B cell (primary cell): ENCODE measurements at regions of chr5 and their contacts with region 1.

Region 1: GRCh38 chr5:56838409-56839039 is 23.2 kb downstream of the MAP3K1 start:
- DNase-seq: peak; percentile 81
- ATAC-seq: peak; percentile 70
- H3K4me3 ChIP-seq: peak overlapping the region in 1 of 5 experiments; percentile 29
- H3K4me3 Mint-ChIP-seq: peak overlapping the region; percentile 47
- H3K27ac ChIP-seq: peak overlapping the region; percentile 48 to 85
- H3K27ac Mint-ChIP-seq: peak overlapping the region; percentile 74
- H3K4me1 ChIP-seq: peaks cover 97% of the 10 kb centered on the region in 2 donors
- H3K4me1 Mint-ChIP-seq: peaks cover 91% of the 10 kb centered on the region
- H3K27me3 ChIP-seq: no peaks in the 10 kb centered on the region
- H3K27me3 Mint-ChIP-seq: no peaks in the 10 kb centered on the region
- CTCF ChIP-seq: peak; percentile 75

Region 2: DNA sequence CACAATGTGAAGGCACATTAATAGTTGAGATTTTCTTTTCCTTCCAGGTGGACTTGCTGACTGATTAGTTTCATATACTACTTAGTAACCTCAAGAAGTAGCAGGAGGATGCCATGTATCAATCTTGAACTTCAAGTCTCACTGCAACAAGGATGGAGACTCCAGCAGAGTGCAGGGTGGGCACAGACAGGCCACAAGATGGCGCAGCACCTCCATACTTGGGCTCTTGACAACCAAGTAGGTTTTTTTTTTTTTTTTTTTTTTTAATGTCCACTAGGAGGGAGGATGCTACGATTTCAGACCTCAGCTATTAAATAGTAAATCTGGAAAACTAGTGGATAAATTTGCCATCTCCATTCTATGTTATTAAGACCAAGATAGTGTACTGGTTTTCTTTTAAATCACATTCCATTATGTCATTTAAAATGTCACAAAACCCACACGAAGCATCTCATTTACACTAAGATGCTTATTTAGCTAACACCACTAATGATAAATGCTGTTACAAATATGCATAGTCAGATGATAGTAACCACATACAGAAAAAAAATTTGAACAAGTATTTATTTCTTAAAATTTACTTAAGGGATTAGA is 902.3 kb before region 1 on chr5:
- CTCF ChIA-PET with region 1: interaction called, 16 read pairs
- POLR2A ChIA-PET with region 1: no interaction called
- intact Hi-C with region 1: loop called (anchors 2 kb)
- DNase-seq: peak; percentile 83
- ATAC-seq: peak; percentile 89
- H3K4me3 ChIP-seq: no peak overlapping the region
- H3K4me3 Mint-ChIP-seq: no peak overlapping the region
- H3K27ac ChIP-seq: no peak overlapping the region
- H3K27ac Mint-ChIP-seq: no peak overlapping the region
- H3K4me1 ChIP-seq: no peaks in the 10 kb centered on the region
- H3K4me1 Mint-ChIP-seq: no peaks in the 10 kb centered on the region
- H3K27me3 ChIP-seq: no peaks in the 10 kb centered on the region
- H3K27me3 Mint-ChIP-seq: no peaks in the 10 kb centered on the region
- CTCF ChIP-seq: peak; percentile 92

Region 3: GRCh38 chr5:56328753-56329560 is 509.6 kb before region 1 on chr5:
- CTCF ChIA-PET with region 1: interaction called, 10 read pairs
- POLR2A ChIA-PET with region 1: no interaction called
- intact Hi-C with region 1: loop called (anchors 5 kb)
- DNase-seq: peak; percentile 59
- ATAC-seq: peak; percentile 76
- H3K4me3 ChIP-seq: peak overlapping the region in 1 of 5 experiments; percentile 46
- H3K4me3 Mint-ChIP-seq: peak overlapping the region; percentile 47
- H3K27ac ChIP-seq: peak overlapping the region; percentile 77 to 92
- H3K27ac Mint-ChIP-seq: peak overlapping the region; percentile 91
- H3K4me1 ChIP-seq: peaks cover 41 to 47% of the 10 kb centered on the region in 2 donors
- H3K4me1 Mint-ChIP-seq: peaks cover 60% of the 10 kb centered on the region
- H3K27me3 ChIP-seq: no peaks in the 10 kb centered on the region
- H3K27me3 Mint-ChIP-seq: no peaks in the 10 kb centered on the region
- CTCF ChIP-seq: no peak

Region 4: GRCh38 chr5:56565644-56566043 is 272.9 kb before region 1 on chr5:
- CTCF ChIA-PET with region 1: interaction called, 21 read pairs
- POLR2A ChIA-PET with region 1: no interaction called
- intact Hi-C with region 1: no loop called
- DNase-seq: peak; percentile 82
- ATAC-seq: peak; percentile 97
- H3K4me3 ChIP-seq: peak overlapping the region in 3 of 5 experiments; percentile 6 to 20 (median 9)
- H3K4me3 Mint-ChIP-seq: peak overlapping the region; percentile 56
- H3K27ac ChIP-seq: no peak overlapping the region
- H3K27ac Mint-ChIP-seq: peak overlapping the region; percentile 69
- H3K4me1 ChIP-seq: peaks cover 34 to 35% of the 10 kb centered on the region in 2 donors
- H3K4me1 Mint-ChIP-seq: peaks cover 41% of the 10 kb centered on the region
- H3K27me3 ChIP-seq: no peaks in the 10 kb centered on the region
- H3K27me3 Mint-ChIP-seq: no peaks in the 10 kb centered on the region
- CTCF ChIP-seq: no peak

Region 5: GRCh38 chr5:56698463-56699381 is 139.8 kb before region 1 on chr5:
- CTCF ChIA-PET with region 1: interaction called, 10 read pairs
- POLR2A ChIA-PET with region 1: no interaction called
- intact Hi-C with region 1: no loop called
- DNase-seq: no peak
- ATAC-seq: no peak
- H3K4me3 ChIP-seq: no peak overlapping the region
- H3K4me3 Mint-ChIP-seq: no peak overlapping the region
- H3K27ac ChIP-seq: no peak overlapping the region
- H3K27ac Mint-ChIP-seq: no peak overlapping the region
- H3K4me1 ChIP-seq: peaks cover 36 to 37% of the 10 kb centered on the region in 2 donors
- H3K4me1 Mint-ChIP-seq: peaks cover 52% of the 10 kb centered on the region
- H3K27me3 ChIP-seq: no peaks in the 10 kb centered on the region
- H3K27me3 Mint-ChIP-seq: no peaks in the 10 kb centered on the region
- CTCF ChIP-seq: no peak

Region 6: GRCh38 chr5:56827049-56827448 is 11.5 kb before region 1 on chr5:
- CTCF ChIA-PET with region 1: interaction called, 29 read pairs
- POLR2A ChIA-PET with region 1: interaction called, 5 read pairs
- intact Hi-C with region 1: loop called (anchors 1 kb)
- DNase-seq: peak; percentile 51
- ATAC-seq: no peak
- H3K4me3 ChIP-seq: no peak overlapping the region
- H3K4me3 Mint-ChIP-seq: peak overlapping the region; percentile 63
- H3K27ac ChIP-seq: peak overlapping the region; percentile 15 to 85
- H3K27ac Mint-ChIP-seq: peak overlapping the region; percentile 82
- H3K4me1 ChIP-seq: peaks cover 83 to 96% of the 10 kb centered on the region in 2 donors
- H3K4me1 Mint-ChIP-seq: peaks cover 89% of the 10 kb centered on the region
- H3K27me3 ChIP-seq: no peaks in the 10 kb centered on the region
- H3K27me3 Mint-ChIP-seq: no peaks in the 10 kb centered on the region
- CTCF ChIP-seq: peak; percentile 44

Region 7: DNA sequence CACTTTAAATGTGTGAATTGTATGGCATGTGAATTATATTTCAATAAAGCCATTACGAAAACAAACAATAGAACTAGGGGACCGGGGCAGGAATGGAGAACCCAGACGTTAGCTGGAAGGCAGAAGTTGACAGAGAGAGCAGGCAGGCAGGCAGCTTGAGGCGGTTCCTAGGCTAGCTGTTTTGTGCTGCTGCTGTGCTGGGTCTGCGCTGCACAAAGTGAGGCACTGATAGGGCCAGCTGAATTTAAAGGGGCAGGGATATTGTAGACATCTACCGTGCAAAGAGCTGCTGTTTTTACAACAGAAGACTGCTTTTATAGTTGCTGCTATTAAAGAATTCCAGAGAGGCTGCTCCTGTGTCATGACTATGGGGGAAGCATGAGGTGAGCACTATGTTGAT is 134.9 kb after region 1 on chr5:
- CTCF ChIA-PET with region 1: no interaction called
- POLR2A ChIA-PET with region 1: no interaction called
- intact Hi-C with region 1: no loop called
- DNase-seq: no peak
- ATAC-seq: no peak
- H3K4me3 ChIP-seq: no peak overlapping the region
- H3K4me3 Mint-ChIP-seq: no peak overlapping the region
- H3K27ac ChIP-seq: no peak overlapping the region
- H3K27ac Mint-ChIP-seq: no peak overlapping the region
- H3K4me1 ChIP-seq: no peaks in the 10 kb centered on the region
- H3K4me1 Mint-ChIP-seq: no peaks in the 10 kb centered on the region
- H3K27me3 ChIP-seq: no peaks in the 10 kb centered on the region
- H3K27me3 Mint-ChIP-seq: peaks cover 7% of the 10 kb centered on the region
- CTCF ChIP-seq: no peak